Caco-2 (cell line): ENCODE measurements at regions of chr2 and their contacts with region 1.

Region 1: GRCh38 chr2:217256251-217256650 is 396.4 kb upstream of the TNP1 start:
- DNase-seq: no peak
- H3K4me3 ChIP-seq: no peak overlapping the region
- H3K4me3 Mint-ChIP-seq: no peak overlapping the region
- H3K27ac Mint-ChIP-seq: no peak overlapping the region
- H3K4me1 ChIP-seq: no peaks in the 10 kb centered on the region
- H3K4me1 Mint-ChIP-seq: no peaks in the 10 kb centered on the region
- H3K27me3 ChIP-seq: no peaks in the 10 kb centered on the region
- H3K27me3 Mint-ChIP-seq: peaks cover 5% of the 10 kb centered on the region
- CTCF ChIP-seq: no peak

Region 2: GRCh38 chr2:216789081-216789480 is 467.2 kb before region 1 on chr2:
- CTCF ChIA-PET with region 1: interaction called, 11 read pairs
- POLR2A ChIA-PET with region 1: no interaction called
- intact Hi-C with region 1: no loop called
- DNase-seq: no peak
- H3K4me3 ChIP-seq: no peak overlapping the region
- H3K4me3 Mint-ChIP-seq: no peak overlapping the region
- H3K27ac Mint-ChIP-seq: no peak overlapping the region
- H3K4me1 ChIP-seq: no peaks in the 10 kb centered on the region
- H3K4me1 Mint-ChIP-seq: no peaks in the 10 kb centered on the region
- H3K27me3 ChIP-seq: no peaks in the 10 kb centered on the region
- H3K27me3 Mint-ChIP-seq: no peaks in the 10 kb centered on the region
- CTCF ChIP-seq: no peak